ENCODE measurements at regions of chr12 and their contacts with region 1.

Region 1: GRCh38 chr12:114221136-114221833 is 184.7 kb downstream of the TBX5 start:
- DNase-seq: no peak
- H3K4me3 ChIP-seq: no peak overlapping the region
- H3K27ac ChIP-seq: no peak overlapping the region
- H3K27me3 ChIP-seq: peaks cover 0 to 18% (median 0%) of the 10 kb centered on the region in 45 donors
- CTCF ChIP-seq: no peak

Region 2: DNA sequence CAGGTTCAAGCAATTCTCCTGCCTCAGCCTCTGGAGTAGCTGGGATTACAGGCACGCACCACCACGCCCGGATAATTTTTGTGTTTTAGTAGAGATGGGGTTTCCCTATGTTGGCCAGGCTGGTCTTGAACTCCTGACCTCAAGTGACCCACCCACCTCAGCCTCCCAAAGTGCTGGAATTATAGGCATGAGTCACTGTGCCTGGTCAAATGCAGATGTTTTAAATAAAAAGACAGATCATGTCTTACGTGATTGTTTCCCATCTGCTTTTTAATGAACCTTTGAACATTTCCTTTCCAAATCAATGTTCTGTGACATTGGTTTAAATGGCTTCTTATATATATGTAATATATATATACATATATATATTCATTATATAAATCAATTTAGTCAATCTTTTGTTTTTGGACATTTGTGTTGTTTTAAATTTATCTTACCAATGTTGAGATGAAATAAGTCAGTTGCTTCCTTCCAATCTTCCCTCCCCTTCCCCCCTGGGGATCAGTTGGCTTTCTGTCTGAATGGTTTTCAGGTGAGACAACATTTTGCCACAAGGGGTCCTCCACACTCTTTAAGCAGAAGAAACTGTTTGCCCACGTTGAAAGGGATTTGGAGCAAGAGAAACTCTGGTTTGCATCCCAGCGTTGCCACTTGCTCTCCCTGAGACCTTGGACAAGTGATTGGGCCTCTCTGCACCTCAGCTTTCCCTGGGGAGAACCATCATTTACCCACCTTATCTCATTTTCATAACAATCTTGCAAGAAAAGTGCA is 207.5 kb before region 1 on chr12:
- intact Hi-C with region 1: no loop called
- DNase-seq: no peak
- H3K4me3 ChIP-seq: no peak overlapping the region
- H3K27ac ChIP-seq: no peak overlapping the region
- H3K27me3 ChIP-seq: peaks cover 0 to 41% (median 4%) of the 10 kb centered on the region in 45 donors
- CTCF ChIP-seq: peak in 2 of 56 donors; percentile 13 to 14

Region 3: GRCh38 chr12:114063435-114063834 is 157.8 kb before region 1 on chr12:
- intact Hi-C with region 1: no loop called
- DNase-seq: no peak
- H3K4me3 ChIP-seq: no peak overlapping the region
- H3K27ac ChIP-seq: no peak overlapping the region
- H3K27me3 ChIP-seq: peaks cover 0 to 12% (median 0%) of the 10 kb centered on the region in 45 donors
- CTCF ChIP-seq: no peak

Region 4: DNA sequence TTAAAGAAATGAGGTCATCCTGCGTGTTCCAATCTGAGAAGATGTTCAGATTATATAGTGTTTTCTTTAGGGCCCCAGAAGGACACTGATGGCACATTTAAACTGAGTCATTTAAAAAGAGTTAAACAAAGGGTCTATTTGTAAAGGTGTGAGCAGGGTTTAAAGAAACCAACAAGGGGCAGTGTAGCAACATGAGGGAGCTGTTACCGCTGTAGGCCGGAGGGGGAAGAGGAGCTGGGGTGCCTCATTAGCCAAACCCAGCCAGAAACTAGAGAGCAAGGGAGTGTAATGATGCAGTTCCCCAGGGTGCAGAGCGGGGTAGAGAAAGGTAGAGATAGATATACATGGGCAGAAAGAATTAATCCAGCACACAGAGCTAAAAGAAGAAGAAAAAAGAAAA is 24.3 kb after region 1 on chr12:
- intact Hi-C with region 1: no loop called
- DNase-seq: no peak
- H3K4me3 ChIP-seq: no peak overlapping the region
- H3K27ac ChIP-seq: no peak overlapping the region
- H3K27me3 ChIP-seq: peaks cover 0 to 35% (median 0%) of the 10 kb centered on the region in 45 donors
- CTCF ChIP-seq: peak in 5 of 56 donors; percentile 12 to 43 (median 16)

Region 5: GRCh38 chr12:114368685-114369452 is 147.6 kb after region 1 on chr12:
- intact Hi-C with region 1: loop called in 1 of 2 experiments (anchors 1 kb)
- DNase-seq: no peak
- H3K4me3 ChIP-seq: no peak overlapping the region
- H3K27ac ChIP-seq: peak overlapping the region in 9 of 59 donors; percentile 5 to 42 (median 29)
- H3K27me3 ChIP-seq: peaks cover 0 to 27% (median 0%) of the 10 kb centered on the region in 45 donors
- CTCF ChIP-seq: no peak

Region 6: GRCh38 chr12:115088328-115088994 is 867.2 kb after region 1 on chr12:
- intact Hi-C with region 1: no loop called
- DNase-seq: no peak
- H3K4me3 ChIP-seq: no peak overlapping the region
- H3K27ac ChIP-seq: no peak overlapping the region
- H3K27me3 ChIP-seq: peaks cover 0 to 8% (median 0%) of the 10 kb centered on the region in 45 donors
- CTCF ChIP-seq: no peak

Measured in dorsolateral prefrontal cortex (tissue), 120 donors.